ENCODE measurements at regions of chr5 and their contacts with region 1.

Region 1: GRCh38 chr5:157271740-157272271 is 5.9 kb downstream of the CYFIP2 start:
- DNase-seq: peak; percentile 97
- ATAC-seq: peak; percentile 80
- H3K4me3 Mint-ChIP-seq: peak overlapping the region; percentile 83
- H3K27ac Mint-ChIP-seq: peak overlapping the region; percentile 98
- H3K4me1 Mint-ChIP-seq: peaks cover 80% of the 10 kb centered on the region
- H3K27me3 Mint-ChIP-seq: no peaks in the 10 kb centered on the region
- CTCF ChIP-seq: no peak

Region 2: DNA sequence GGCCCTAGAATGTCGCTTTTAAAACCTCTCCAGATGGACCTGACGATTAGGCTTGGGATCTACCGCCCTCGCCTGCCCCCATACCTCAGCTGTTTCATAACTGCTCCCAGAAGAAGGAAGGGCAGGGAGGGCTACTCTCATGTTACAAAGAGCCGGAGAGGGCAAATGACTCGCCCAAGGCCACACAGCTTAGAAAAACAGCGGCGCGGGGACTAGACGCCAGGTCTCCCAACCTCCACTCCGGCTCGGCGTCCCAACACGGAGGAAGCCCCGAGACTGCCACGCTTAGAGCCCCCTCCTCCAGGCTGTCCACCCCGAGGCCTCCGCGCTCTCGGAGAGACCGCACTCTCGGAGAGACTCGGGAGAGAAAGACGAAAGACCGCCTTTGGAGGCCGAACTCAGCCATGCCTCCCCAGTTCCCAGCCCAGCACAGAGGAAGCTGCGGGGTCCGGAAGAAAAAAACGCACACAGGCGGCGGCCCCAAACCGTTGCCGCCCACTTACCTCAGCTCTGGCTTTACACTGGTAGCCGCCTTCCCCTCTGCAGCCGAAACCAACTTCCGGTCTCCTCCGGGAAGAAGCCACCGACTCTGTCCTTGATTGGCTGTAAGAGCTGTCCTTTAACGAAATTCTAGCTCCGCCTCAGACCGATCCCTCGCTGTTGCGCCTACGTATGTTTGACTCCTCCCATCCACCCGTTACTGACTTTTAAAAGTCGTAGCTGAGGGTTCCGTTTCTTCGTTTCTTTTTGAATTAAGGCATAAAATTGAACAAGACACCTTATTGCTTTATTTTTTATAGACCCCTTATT is 129.3 kb before region 1 on chr5 and contains the start of gene MED7:
- CTCF ChIA-PET with region 1: interaction called, 5 read pairs
- POLR2A ChIA-PET with region 1: interaction called, 19 read pairs
- intact Hi-C with region 1: loop called (anchors 5 kb)
- DNase-seq: peak; percentile 96
- ATAC-seq: peak; percentile 98
- H3K4me3 Mint-ChIP-seq: peak within 1 kb of the TSS; percentile 86
- H3K27ac Mint-ChIP-seq: peak within 1 kb of the TSS; percentile 98
- H3K4me1 Mint-ChIP-seq: peaks cover 39% of the 10 kb centered on the region
- H3K27me3 Mint-ChIP-seq: no peaks in the 10 kb centered on the region
- CTCF ChIP-seq: no peak
- total RNA-seq, gene MED7: 13.6 to 13.7 TPM

Region 3: GRCh38 chr5:157172403-157172802 is 99.4 kb before region 1 on chr5:
- CTCF ChIA-PET with region 1: no interaction called
- POLR2A ChIA-PET with region 1: interaction called, 8 read pairs
- intact Hi-C with region 1: loop called (anchors 5 kb)
- DNase-seq: peak; percentile 98
- ATAC-seq: peak; percentile 92
- H3K4me3 Mint-ChIP-seq: peak overlapping the region; percentile 62
- H3K27ac Mint-ChIP-seq: peak overlapping the region; percentile 93
- H3K4me1 Mint-ChIP-seq: peaks cover 82% of the 10 kb centered on the region
- H3K27me3 Mint-ChIP-seq: no peaks in the 10 kb centered on the region
- CTCF ChIP-seq: no peak

Region 4: GRCh38 chr5:157189223-157189622 is 82.6 kb before region 1 on chr5:
- CTCF ChIA-PET with region 1: no interaction called
- POLR2A ChIA-PET with region 1: interaction called, 37 read pairs
- intact Hi-C with region 1: no loop called
- DNase-seq: peak; percentile 68
- ATAC-seq: peak; percentile 50
- H3K4me3 Mint-ChIP-seq: peak overlapping the region; percentile 99
- H3K27ac Mint-ChIP-seq: peak overlapping the region; percentile 94
- H3K4me1 Mint-ChIP-seq: peaks cover 56% of the 10 kb centered on the region
- H3K27me3 Mint-ChIP-seq: no peaks in the 10 kb centered on the region
- CTCF ChIP-seq: no peak

Region 5: GRCh38 chr5:157245477-157245876 is 26.3 kb before region 1 on chr5:
- CTCF ChIA-PET with region 1: interaction called, 8 read pairs
- POLR2A ChIA-PET with region 1: interaction called, 18 read pairs
- intact Hi-C with region 1: no loop called
- DNase-seq: no peak
- ATAC-seq: no peak
- H3K4me3 Mint-ChIP-seq: no peak overlapping the region
- H3K27ac Mint-ChIP-seq: peak overlapping the region; percentile 95
- H3K4me1 Mint-ChIP-seq: peaks cover 88% of the 10 kb centered on the region
- H3K27me3 Mint-ChIP-seq: no peaks in the 10 kb centered on the region
- CTCF ChIP-seq: no peak

Region 6: GRCh38 chr5:157259699-157260098 is 12.1 kb before region 1 on chr5:
- CTCF ChIA-PET with region 1: interaction called, 38 read pairs
- POLR2A ChIA-PET with region 1: interaction called, 98 read pairs
- intact Hi-C with region 1: no loop called
- DNase-seq: no peak
- ATAC-seq: peak; percentile 25
- H3K4me3 Mint-ChIP-seq: no peak overlapping the region
- H3K27ac Mint-ChIP-seq: peak overlapping the region; percentile 30
- H3K4me1 Mint-ChIP-seq: peaks cover 80% of the 10 kb centered on the region
- H3K27me3 Mint-ChIP-seq: no peaks in the 10 kb centered on the region
- CTCF ChIP-seq: no peak

Region 7: DNA sequence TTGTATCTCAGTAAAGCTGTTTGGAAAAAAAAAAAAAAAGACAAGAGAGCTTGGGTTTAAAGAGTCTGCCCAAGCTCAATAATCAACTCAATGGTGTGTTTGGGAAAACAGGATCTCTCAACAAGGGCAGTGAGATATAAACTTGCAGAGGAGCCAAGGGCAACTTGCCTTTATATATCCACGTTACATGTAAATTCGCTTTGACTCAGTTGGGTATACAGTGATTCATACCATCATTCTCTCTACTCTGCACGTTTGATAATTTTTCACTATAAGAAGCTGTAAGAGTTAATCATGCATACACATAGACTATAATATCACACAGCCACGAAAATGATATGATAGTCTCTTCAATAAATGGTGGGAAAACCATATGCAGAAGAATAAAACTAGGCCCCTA is 278.9 kb after region 1 on chr5:
- CTCF ChIA-PET with region 1: no interaction called
- POLR2A ChIA-PET with region 1: no interaction called
- intact Hi-C with region 1: no loop called
- DNase-seq: no peak
- ATAC-seq: no peak
- H3K4me3 Mint-ChIP-seq: no peak overlapping the region
- H3K27ac Mint-ChIP-seq: no peak overlapping the region
- H3K4me1 Mint-ChIP-seq: peaks cover 29% of the 10 kb centered on the region
- H3K27me3 Mint-ChIP-seq: no peaks in the 10 kb centered on the region
- CTCF ChIP-seq: no peak